Activated naive CD4-positive, alpha-beta T cell treated with anti-CD3 and anti-CD28 coated beads for 36 hours (primary cell): ENCODE measurements at regions of chr1 and their contacts with region 1.

Region 1: DNA sequence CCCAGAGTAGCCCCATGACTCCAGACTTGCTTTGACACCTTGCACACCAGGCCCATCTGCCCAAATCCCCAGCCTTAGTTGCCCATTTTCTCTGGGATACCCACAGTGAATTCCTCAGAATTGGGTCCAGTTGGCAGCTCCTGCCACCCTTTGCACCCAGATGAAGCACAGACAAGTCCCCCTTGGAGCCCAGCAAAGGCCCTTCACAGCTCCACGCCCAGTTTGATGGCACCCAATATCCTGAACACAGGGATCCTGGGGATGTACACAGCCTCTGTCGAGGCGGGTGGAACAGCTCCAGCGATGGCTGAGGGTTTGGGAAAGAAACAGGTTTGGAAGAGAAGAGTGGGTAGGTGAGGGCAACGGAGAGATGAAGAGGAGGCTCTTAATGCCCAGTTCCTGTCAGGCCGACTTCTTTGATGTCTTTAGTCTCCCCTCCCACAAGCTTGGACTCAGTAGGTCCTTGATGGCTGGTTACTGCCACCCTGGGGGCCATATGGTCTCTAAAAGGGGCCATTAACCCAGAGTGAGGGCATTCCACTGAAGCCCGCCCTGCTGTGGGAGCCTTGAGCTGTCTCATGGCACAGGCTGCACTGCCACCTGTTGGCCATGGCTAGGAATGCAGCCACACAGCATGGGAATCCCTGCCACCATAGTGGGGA is 21.7 kb downstream of the TMEM53 start:
- DNase-seq: peak; percentile 83
- H3K4me3 Mint-ChIP-seq: no peak overlapping the region
- H3K27ac Mint-ChIP-seq: no peak overlapping the region
- H3K4me1 Mint-ChIP-seq: no peaks in the 10 kb centered on the region
- H3K27me3 Mint-ChIP-seq: no peaks in the 10 kb centered on the region

Region 2: GRCh38 chr1:44571712-44572571 is 80.6 kb before region 1 on chr1:
- CTCF ChIA-PET with region 1: interaction called, 47 read pairs
- intact Hi-C with region 1: loop called (anchors 1 kb)
- DNase-seq: peak; percentile 33
- H3K4me3 Mint-ChIP-seq: no peak overlapping the region
- H3K27ac Mint-ChIP-seq: no peak overlapping the region
- H3K4me1 Mint-ChIP-seq: no peaks in the 10 kb centered on the region
- H3K27me3 Mint-ChIP-seq: peaks cover 6% of the 10 kb centered on the region

Region 3: GRCh38 chr1:44619261-44619900 is 33.2 kb before region 1 on chr1:
- CTCF ChIA-PET with region 1: interaction called, 10 read pairs
- intact Hi-C with region 1: no loop called
- DNase-seq: no peak
- H3K4me3 Mint-ChIP-seq: no peak overlapping the region
- H3K27ac Mint-ChIP-seq: no peak overlapping the region
- H3K4me1 Mint-ChIP-seq: no peaks in the 10 kb centered on the region
- H3K27me3 Mint-ChIP-seq: no peaks in the 10 kb centered on the region

Region 4: DNA sequence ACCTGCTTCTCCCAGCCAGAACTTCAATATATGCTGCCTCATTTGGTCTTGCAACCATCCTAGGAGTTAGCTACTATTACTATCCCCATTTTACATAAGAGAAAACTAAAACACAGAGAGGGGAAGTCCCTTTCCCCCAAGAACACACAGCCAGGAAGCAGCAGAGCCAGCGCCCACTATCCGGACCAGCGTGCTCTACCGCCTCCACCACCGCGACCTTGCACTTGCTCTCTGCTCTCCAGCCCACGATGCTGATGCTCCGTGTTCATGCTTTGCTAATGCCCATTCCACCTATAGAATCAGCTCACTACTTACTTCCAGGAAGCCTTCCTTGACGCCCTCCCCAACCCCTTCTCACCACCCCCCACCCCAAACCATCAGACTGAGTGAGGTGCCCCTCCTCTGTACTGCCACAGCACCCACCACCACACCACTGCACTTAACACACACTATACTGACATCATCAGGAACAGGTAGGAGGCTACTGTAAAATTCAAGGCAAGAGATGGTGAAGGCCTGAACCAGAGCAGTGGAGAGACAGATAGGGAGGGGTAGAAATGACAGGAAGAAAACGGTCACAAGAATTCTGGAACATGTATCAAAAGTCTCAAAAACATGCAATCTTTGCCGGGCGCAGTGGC is 12.3 kb after region 1 on chr1:
- CTCF ChIA-PET with region 1: interaction called, 38 read pairs
- intact Hi-C with region 1: no loop called
- DNase-seq: peak; percentile 45
- H3K4me3 Mint-ChIP-seq: no peak overlapping the region
- H3K27ac Mint-ChIP-seq: no peak overlapping the region
- H3K4me1 Mint-ChIP-seq: peaks cover 16% of the 10 kb centered on the region
- H3K27me3 Mint-ChIP-seq: no peaks in the 10 kb centered on the region

Region 5: GRCh38 chr1:44696789-44697345 is 44.3 kb after region 1 on chr1:
- CTCF ChIA-PET with region 1: interaction called, 19 read pairs
- intact Hi-C with region 1: no loop called
- DNase-seq: peak; percentile 74
- H3K4me3 Mint-ChIP-seq: no peak overlapping the region
- H3K27ac Mint-ChIP-seq: peak overlapping the region; percentile 63
- H3K4me1 Mint-ChIP-seq: peaks cover 29% of the 10 kb centered on the region
- H3K27me3 Mint-ChIP-seq: no peaks in the 10 kb centered on the region

Region 6: DNA sequence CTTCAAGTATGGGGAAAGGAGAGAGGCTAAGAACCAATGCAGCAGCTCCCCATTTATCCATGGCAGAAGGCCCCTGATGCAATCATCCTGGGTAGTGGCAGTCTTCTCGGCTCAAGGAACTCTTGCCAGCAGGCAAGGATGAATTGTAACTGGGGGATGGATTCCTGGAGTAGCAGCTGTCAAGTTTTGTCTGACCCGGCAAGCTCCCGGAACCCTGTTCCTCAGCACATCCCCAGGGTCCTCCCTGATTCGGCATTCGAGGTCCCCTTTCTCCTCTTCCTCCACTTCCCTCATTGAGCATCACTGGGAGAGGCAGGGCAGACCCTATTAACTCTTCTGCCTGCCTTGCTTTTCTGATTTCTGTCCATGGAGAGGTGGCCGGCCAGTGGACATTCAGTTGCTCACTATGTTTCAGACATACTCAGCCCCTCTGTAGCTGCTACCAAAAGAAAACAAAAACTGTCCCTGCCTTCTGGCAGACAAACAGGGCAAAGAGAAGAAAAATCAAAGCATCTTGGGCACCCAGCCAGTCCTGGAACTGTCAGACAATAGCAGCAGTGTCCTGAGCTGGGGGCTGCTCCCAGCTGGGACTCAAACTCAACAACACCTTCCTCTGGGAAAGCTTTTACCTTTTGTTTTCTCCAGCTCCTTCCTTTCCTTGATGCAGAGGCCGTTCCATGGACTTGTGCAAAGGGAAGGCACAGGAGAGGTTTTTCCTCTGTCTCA is 196.0 kb after region 1 on chr1:
- CTCF ChIA-PET with region 1: no interaction called
- intact Hi-C with region 1: no loop called
- DNase-seq: no peak
- H3K4me3 Mint-ChIP-seq: no peak overlapping the region
- H3K27ac Mint-ChIP-seq: peak overlapping the region; percentile 13
- H3K4me1 Mint-ChIP-seq: peaks cover 14% of the 10 kb centered on the region
- H3K27me3 Mint-ChIP-seq: peaks cover 3% of the 10 kb centered on the region

Region 7: DNA sequence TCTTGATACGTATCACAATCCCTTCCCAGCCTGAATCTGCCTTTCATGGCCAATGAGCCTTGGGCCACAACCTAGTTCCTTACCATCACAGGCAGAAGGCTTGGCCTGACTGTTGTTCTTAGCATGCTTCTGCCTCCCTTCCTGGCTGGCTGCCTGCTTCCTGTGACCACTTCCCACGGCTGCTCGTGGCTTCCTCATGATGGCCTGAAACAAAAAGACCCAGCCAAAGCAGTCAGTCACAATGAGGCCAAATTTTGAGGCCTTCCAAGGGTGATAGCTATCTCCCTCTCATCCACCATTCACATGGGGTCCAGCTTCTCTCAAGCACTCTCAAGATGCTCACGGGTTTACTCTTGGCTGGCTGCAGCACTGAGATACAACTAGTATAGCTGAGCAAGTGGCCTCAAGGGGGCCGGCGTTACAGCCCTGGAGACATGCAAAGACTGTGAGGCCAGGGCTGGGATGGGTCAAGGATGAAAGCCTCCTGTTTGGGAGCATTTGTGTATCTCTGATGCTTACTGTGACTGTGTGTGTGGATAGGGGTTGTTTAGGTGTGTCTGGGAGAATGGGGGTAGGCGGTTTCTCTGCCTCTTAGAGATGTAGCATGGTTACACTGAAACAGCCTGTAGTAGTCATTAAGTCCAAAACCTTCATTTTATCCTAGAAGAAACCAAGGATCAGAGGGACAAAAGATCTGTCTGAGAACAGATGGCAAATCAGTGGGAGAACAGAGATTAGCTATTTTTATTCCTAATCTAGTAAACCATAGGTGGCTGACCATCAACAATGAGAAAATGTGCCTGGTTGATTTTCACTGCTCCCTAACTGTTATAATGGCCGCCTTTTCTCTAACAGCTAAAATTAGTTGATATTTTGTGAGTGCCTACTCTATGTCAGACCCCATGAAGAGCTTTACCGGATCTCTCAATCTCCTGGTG is 682.0 kb after region 1 on chr1:
- CTCF ChIA-PET with region 1: no interaction called
- intact Hi-C with region 1: no loop called
- DNase-seq: no peak
- H3K4me3 Mint-ChIP-seq: no peak overlapping the region
- H3K27ac Mint-ChIP-seq: peak overlapping the region; percentile 13
- H3K4me1 Mint-ChIP-seq: peaks cover 19% of the 10 kb centered on the region
- H3K27me3 Mint-ChIP-seq: no peaks in the 10 kb centered on the region